Activated CD4-positive, alpha-beta T cell treated with anti-CD3 and anti-CD28 coated beads for 36 hours (primary cell): ENCODE measurements at regions of chr2 and their contacts with region 1.

Region 1: GRCh38 chr2:29130295-29130694 is 15.1 kb downstream of the CLIP4 start:
- DNase-seq: peak; percentile 56
- ATAC-seq: peak; percentile 97
- H3K4me3 Mint-ChIP-seq: peak overlapping the region; percentile 21
- H3K27ac Mint-ChIP-seq: peak overlapping the region; percentile 25
- H3K4me1 Mint-ChIP-seq: peaks cover 34% of the 10 kb centered on the region
- H3K27me3 Mint-ChIP-seq: no peaks in the 10 kb centered on the region

Region 2: GRCh38 chr2:28594289-28595108 is 535.8 kb before region 1 on chr2:
- CTCF ChIA-PET with region 1: no interaction called
- POLR2A ChIA-PET with region 1: no interaction called
- intact Hi-C with region 1: no loop called
- DNase-seq: peak; percentile 93
- ATAC-seq: peak; percentile 90
- H3K4me3 Mint-ChIP-seq: peak overlapping the region; percentile 39
- H3K27ac Mint-ChIP-seq: peak overlapping the region; percentile 75
- H3K4me1 Mint-ChIP-seq: peaks cover 18% of the 10 kb centered on the region
- H3K27me3 Mint-ChIP-seq: no peaks in the 10 kb centered on the region

Region 3: GRCh38 chr2:29014811-29015421 is 115.4 kb before region 1 on chr2:
- CTCF ChIA-PET with region 1: no interaction called
- POLR2A ChIA-PET with region 1: no interaction called
- intact Hi-C with region 1: loop called in 1 of 2 experiments (anchors 5 kb)
- DNase-seq: peak; percentile 80
- ATAC-seq: peak; percentile 82
- H3K4me3 Mint-ChIP-seq: peak overlapping the region; percentile 75
- H3K27ac Mint-ChIP-seq: peak overlapping the region; percentile 94
- H3K4me1 Mint-ChIP-seq: peaks cover 78% of the 10 kb centered on the region
- H3K27me3 Mint-ChIP-seq: no peaks in the 10 kb centered on the region

Region 4: DNA sequence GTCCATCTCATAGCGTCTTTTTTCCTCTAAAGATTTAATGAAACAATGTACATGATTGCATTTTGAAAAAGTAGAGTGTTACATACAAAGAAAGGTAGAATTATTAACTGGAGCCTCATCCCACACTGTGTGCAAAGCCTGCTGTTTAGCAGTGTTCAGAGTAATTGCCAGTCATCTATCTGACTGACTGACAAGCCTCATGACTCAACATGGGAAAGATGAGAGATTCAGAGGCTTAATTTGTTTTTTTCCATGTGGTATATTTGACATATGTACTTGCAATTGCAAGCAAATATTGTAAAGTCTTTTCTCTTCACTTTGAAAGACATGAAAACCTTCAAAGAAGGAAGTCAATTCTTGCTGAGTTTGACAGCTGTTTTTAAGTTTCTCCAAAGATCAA is 70.7 kb before region 1 on chr2:
- CTCF ChIA-PET with region 1: interaction called, 3 read pairs
- POLR2A ChIA-PET with region 1: interaction called, 3 read pairs
- intact Hi-C with region 1: loop called in 1 of 2 experiments (anchors 5 kb)
- DNase-seq: no peak
- ATAC-seq: peak; percentile 96
- H3K4me3 Mint-ChIP-seq: no peak overlapping the region
- H3K27ac Mint-ChIP-seq: peak overlapping the region; percentile 15
- H3K4me1 Mint-ChIP-seq: peaks cover 19% of the 10 kb centered on the region
- H3K27me3 Mint-ChIP-seq: no peaks in the 10 kb centered on the region